A549 (cell line): ENCODE measurements at regions of chr12 and their contacts with region 1.

Region 1: GRCh38 chr12:122951979-122952892 is 14.0 kb downstream of the ABCB9 start:
- DNase-seq: peak; percentile 79 to 87
- ATAC-seq: peak; percentile 95 to 98
- H3K4me3 ChIP-seq: no peak overlapping the region
- H3K27ac ChIP-seq: peak overlapping the region; percentile 57 to 72; a peak in 5 of 6 replicates
- H3K4me1 ChIP-seq: peaks cover 25% of the 10 kb centered on the region
- CTCF ChIP-seq: peak; percentile 93
- EP300 ChIP-seq: no peak
- POLR2A ChIP-seq: no peak
- RAD21 ChIP-seq: peak; percentile 97 to 99

Region 2: GRCh38 chr12:122602456-122602855 is 349.8 kb before region 1 on chr12:
- CTCF ChIA-PET with region 1: no interaction called
- POLR2A ChIA-PET with region 1: no interaction called
- DNase-seq: no peak
- ATAC-seq: no peak
- H3K4me3 ChIP-seq: no peak overlapping the region
- H3K27ac ChIP-seq: no peak overlapping the region
- H3K4me1 ChIP-seq: no peaks in the 10 kb centered on the region
- CTCF ChIP-seq: no peak
- EP300 ChIP-seq: no peak
- POLR2A ChIP-seq: no peak
- RAD21 ChIP-seq: no peak

Region 3: DNA sequence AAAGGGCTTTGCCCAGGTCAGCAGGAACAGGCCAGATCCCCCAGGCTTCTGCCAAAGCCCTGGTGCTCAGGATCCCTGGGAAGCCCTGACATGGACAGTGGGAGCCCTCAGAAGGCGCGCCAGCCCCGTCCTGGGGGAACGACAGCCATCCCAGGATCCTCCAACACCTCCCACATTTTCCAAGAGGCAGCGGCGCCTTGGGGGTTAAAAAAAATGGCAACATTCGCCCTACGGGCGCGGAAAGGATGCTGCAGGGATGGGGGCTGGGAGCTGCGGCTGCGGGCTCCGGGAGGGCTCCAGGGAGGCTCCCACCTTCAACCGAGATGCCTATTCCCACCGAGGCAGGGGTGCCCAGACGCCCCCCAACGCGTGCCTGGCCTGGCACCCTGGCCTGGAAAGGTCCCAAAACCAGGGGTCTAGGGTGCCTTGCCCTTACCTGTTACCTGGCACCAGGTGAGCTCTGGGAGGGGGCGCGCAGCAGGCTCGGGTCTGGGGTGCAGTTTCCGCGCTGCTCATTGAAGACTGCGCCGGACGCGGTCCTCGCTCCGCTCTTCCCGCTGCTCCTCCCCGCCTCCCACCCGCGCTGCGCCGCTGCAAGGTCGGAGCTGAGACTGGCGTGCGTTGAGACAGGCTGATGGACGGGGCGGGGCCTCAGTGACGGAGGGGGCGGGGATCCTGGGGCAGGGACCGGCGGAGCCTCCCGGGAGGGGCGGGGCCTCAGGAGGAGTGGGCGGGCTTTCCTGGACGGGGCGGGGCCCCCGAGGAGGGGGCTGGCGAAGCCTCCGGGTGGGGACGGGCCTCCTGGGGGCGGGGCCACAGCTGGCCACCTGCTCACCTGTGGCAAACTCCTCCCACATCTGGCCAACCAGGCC is 13.9 kb after region 1 on chr12 and contains the start of gene ABCB9:
- CTCF ChIA-PET with region 1: interaction called, 47 read pairs
- POLR2A ChIA-PET with region 1: no interaction called
- DNase-seq: peak; percentile 90 to 93
- ATAC-seq: peak; percentile 88 to 96
- H3K4me3 ChIP-seq: peak within 1 kb of the TSS; percentile 77
- H3K27ac ChIP-seq: peak within 1 kb of the TSS; percentile 75 to 83
- H3K4me1 ChIP-seq: peaks cover 21% of the 10 kb centered on the region
- CTCF ChIP-seq: no peak
- EP300 ChIP-seq: no peak
- POLR2A ChIP-seq: peak; percentile 85
- RAD21 ChIP-seq: no peak
- polyA plus RNA-seq, gene ABCB9: 2.7 and 3.1 TPM in 2 replicates